Lower leg skin (tissue), 4 donors: ENCODE measurements at regions of chr3 and their contacts with region 1.

Region 1: DNA sequence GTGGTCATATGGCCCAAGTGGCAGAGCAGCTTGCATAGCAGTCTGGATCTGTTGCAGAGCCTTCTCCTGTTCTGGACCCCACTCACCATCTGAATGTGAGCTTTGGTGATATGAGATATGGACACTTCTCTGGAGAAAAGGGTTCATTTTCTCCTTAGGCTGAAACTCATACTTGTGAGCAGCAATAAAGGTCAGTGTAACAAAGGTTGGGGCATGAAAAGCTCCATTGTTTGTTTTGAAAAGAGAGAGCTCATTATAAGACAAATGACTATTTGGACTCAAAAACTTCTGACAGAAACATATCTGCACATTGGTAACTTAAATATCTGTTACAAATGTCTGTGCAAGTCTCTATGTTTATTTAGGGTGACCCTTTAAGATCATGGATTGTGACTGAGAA is 517.3 kb downstream of the MFSD1 start:
- DNase-seq: no peak
- H3K4me3 ChIP-seq: no peak overlapping the region
- CTCF ChIP-seq: no peak
- POLR2A ChIP-seq: no peak

Region 2: DNA sequence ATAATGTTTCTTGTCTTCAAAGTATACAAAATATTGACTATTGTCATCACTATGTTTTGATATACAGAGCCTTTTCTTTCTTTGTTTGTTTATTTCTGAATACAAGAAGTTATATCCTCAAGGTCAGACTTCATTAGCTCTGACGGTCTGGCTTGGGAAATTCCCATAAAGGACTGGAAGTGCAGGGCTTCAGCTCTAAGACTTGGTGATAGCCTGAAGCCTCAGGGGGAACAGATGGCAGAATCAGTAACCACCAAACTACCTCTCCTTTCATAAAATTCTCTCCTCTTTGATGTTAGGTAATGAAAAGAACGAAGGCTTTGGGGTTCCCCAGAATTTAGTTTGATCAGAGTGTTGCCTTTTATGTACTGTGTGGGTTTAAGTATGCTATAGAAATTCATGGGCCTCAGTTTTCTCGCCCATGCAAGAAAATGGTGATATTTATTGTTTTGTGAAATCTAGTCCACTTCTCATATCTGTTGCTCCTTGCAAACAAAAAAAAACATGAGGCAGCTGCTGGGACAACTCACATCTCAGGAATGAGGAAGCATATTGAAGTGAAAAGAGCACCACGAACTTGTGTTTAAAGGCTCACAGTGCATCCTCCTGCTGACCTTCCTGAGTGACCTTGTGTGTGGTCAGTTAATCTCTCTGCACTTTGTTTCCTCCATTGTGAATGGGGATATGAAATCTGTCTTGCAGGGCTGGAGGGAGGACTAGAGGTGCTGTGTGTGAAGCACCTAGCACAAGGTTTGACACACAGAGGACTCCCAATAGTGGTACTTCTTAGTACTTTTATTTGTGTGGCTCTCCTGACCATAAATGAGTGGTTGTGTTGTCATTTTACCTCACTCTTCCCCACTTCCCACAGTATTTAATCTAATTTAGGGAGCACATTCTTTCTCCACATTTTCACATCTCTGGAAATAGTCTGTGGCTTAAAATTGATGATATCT is 99.7 kb after region 1 on chr3:
- intact Hi-C with region 1: no loop called
- DNase-seq: no peak
- H3K4me3 ChIP-seq: no peak overlapping the region
- CTCF ChIP-seq: no peak
- POLR2A ChIP-seq: no peak

Region 3: GRCh38 chr3:160473978-160474377 is 1154.8 kb after region 1 on chr3:
- intact Hi-C with region 1: loop called (anchors 5 kb)
- DNase-seq: no peak
- H3K4me3 ChIP-seq: no peak overlapping the region
- CTCF ChIP-seq: no peak
- POLR2A ChIP-seq: no peak